Activated B cell treated with CpG ODN at 0.5 μM for 24 hours (primary cell): ENCODE measurements at regions of chr13 and their contacts with region 1.

Region 1: DNA sequence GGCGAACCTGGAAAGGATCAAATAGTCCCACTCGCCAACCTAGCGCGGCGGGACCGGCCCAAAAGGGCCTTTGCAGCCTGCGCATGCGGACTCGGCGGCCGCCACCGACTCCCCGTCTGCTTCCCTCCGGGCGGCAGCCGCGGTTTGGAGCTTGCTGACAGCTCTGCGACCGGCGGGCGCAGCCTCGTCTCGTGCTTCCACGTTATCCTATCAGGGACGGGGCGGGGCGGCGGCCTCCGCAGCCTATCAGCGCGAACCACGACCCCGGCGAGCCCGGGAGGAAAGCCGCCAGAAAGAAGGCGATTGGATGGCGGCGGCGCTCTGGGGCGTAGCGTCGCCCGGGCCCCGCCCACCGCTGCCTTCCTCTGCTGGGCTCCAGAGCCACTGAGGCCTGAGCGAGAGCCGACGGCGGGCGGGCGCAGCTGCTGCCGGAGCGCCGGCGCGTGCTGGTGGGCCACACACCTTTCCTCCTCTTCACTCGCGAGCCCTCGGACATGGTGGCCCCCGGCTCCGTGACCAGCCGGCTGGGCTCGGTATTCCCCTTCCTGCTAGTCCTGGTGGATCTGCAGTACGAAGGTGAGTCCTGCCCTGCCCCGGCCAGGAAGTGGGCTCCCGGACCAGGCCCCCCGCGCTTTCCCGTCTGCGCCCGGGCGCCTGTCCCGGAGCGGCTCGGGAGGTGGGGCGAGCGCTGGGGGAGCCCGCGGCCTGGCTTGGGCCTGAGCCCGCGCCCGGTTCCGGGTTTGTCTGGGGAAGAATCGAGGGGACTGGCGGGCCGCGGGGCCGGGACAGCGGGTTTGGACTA is at the start of gene DNAJC3:
- DNase-seq: peak; percentile 97
- ATAC-seq: peak; percentile 94
- H3K4me3 Mint-ChIP-seq: peak within 1 kb of the TSS; percentile 96
- H3K27ac Mint-ChIP-seq: peak within 1 kb of the TSS; percentile 92
- H3K4me1 Mint-ChIP-seq: peaks cover 52% of the 10 kb centered on the region
- H3K27me3 Mint-ChIP-seq: no peaks in the 10 kb centered on the region
- CTCF ChIP-seq: no peak
- total RNA-seq, gene DNAJC3: 14.7 and 17.4 TPM in 2 replicates

Region 2: DNA sequence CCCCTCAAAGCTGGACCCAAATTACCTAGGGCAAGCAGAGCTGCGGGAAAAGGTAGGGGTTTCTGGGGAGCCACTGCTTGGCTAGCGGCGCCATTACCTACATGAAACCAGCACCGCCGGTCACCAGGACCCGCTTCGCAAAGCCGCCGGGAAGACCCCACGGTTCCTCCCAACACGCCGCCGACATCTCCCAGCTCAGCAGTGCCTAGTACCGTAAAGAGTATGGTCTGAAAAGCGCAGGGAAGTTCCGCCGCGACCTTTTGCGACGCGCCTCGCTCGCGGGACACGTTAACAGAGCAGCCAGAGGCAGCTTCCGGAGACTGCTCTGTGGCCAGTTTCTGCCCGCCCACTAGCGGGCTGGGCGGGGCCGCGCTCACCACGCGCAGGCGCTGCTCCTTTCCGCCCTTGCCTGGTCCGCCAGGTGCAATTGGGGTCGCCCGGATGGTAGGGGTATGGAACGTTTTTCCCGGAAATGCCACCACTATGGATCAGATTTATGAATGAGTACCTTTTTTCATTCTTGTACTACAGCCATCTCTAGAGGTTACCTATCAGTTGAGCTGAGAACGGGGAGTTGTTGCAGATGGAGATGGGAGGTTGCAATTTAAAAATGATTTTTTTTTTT is 1080.9 kb before region 1 on chr13 and contains the start of gene TGDS:
- CTCF ChIA-PET with region 1: no interaction called
- POLR2A ChIA-PET with region 1: interaction called, 4 read pairs
- intact Hi-C with region 1: loop called (anchors 2 kb)
- DNase-seq: peak; percentile 82
- ATAC-seq: peak; percentile 97
- H3K4me3 Mint-ChIP-seq: peak within 1 kb of the TSS; percentile 91
- H3K27ac Mint-ChIP-seq: peak within 1 kb of the TSS; percentile 89
- H3K4me1 Mint-ChIP-seq: peaks cover 31% of the 10 kb centered on the region
- H3K27me3 Mint-ChIP-seq: no peaks in the 10 kb centered on the region
- CTCF ChIP-seq: no peak
- total RNA-seq, gene TGDS: 11.5 and 12.7 TPM in 2 replicates

Region 3: GRCh38 chr13:94784066-94784465 is 892.9 kb before region 1 on chr13:
- CTCF ChIA-PET with region 1: no interaction called
- POLR2A ChIA-PET with region 1: no interaction called
- intact Hi-C with region 1: no loop called
- DNase-seq: no peak
- ATAC-seq: no peak
- H3K4me3 Mint-ChIP-seq: no peak overlapping the region
- H3K27ac Mint-ChIP-seq: no peak overlapping the region
- H3K4me1 Mint-ChIP-seq: no peaks in the 10 kb centered on the region
- H3K27me3 Mint-ChIP-seq: no peaks in the 10 kb centered on the region
- CTCF ChIP-seq: no peak

Region 4: GRCh38 chr13:95301183-95301967 is 375.6 kb before region 1 on chr13 and contains the start of gene ABCC4:
- CTCF ChIA-PET with region 1: no interaction called
- POLR2A ChIA-PET with region 1: no interaction called
- intact Hi-C with region 1: loop called (anchors 5 kb)
- DNase-seq: peak; percentile 61
- ATAC-seq: peak; percentile 82
- H3K4me3 Mint-ChIP-seq: peak within 1 kb of the TSS; percentile 83
- H3K27ac Mint-ChIP-seq: peak within 1 kb of the TSS; percentile 38
- H3K4me1 Mint-ChIP-seq: peaks cover 26% of the 10 kb centered on the region
- H3K27me3 Mint-ChIP-seq: no peaks in the 10 kb centered on the region
- CTCF ChIP-seq: no peak
- total RNA-seq, gene ABCC4: 10.8 and 11.7 TPM in 2 replicates

Region 5: DNA sequence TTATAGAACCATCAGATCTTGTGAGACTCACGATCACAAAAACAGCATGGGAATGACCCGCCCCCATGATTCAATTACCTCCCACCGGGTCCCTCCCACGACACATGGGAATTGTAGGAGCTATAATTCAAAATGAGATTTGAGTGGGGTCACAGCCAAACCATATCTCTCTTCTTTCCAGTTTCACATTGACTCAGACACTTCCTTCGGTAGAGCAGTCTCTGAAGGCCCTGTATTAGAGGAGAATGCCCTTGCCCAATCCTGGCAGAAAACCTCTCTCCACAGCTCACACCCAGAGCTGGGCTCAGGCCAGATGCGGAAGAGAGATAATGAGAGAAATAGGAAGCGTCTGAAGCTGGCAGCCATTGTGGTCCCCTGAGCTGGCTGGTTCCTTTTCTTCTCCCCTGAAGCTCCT is 196.8 kb before region 1 on chr13:
- CTCF ChIA-PET with region 1: no interaction called
- POLR2A ChIA-PET with region 1: no interaction called
- intact Hi-C with region 1: loop called (anchors 2 kb)
- DNase-seq: no peak
- ATAC-seq: no peak
- H3K4me3 Mint-ChIP-seq: no peak overlapping the region
- H3K27ac Mint-ChIP-seq: no peak overlapping the region
- H3K4me1 Mint-ChIP-seq: peaks cover 5% of the 10 kb centered on the region
- H3K27me3 Mint-ChIP-seq: peaks cover 9% of the 10 kb centered on the region
- CTCF ChIP-seq: no peak

Region 6: GRCh38 chr13:95650696-95651095 is 26.3 kb before region 1 on chr13:
- CTCF ChIA-PET with region 1: no interaction called
- POLR2A ChIA-PET with region 1: no interaction called
- intact Hi-C with region 1: no loop called
- DNase-seq: no peak
- ATAC-seq: no peak
- H3K4me3 Mint-ChIP-seq: no peak overlapping the region
- H3K27ac Mint-ChIP-seq: no peak overlapping the region
- H3K4me1 Mint-ChIP-seq: no peaks in the 10 kb centered on the region
- H3K27me3 Mint-ChIP-seq: peaks cover 6% of the 10 kb centered on the region
- CTCF ChIP-seq: no peak

Region 7: GRCh38 chr13:95779522-95779921 is 102.6 kb after region 1 on chr13:
- CTCF ChIA-PET with region 1: no interaction called
- POLR2A ChIA-PET with region 1: no interaction called
- intact Hi-C with region 1: loop called (anchors 5 kb)
- DNase-seq: no peak
- ATAC-seq: no peak
- H3K4me3 Mint-ChIP-seq: no peak overlapping the region
- H3K27ac Mint-ChIP-seq: no peak overlapping the region
- H3K4me1 Mint-ChIP-seq: no peaks in the 10 kb centered on the region
- H3K27me3 Mint-ChIP-seq: no peaks in the 10 kb centered on the region
- CTCF ChIP-seq: no peak